Mammary epithelial cell (primary cell): ENCODE measurements at regions of chr10 and their contacts with region 1.

Region 1: GRCh38 chr10:114239117-114239993 is at the start of gene VWA2:
- DNase-seq: no peak
- H3K4me3 ChIP-seq: peak within 1 kb of the TSS; percentile 38 to 54 (median 52)
- H3K27ac ChIP-seq: no peak within 1 kb of the TSS
- H3K4me1 ChIP-seq: peaks cover 21% of the 10 kb centered on the region
- H3K27me3 ChIP-seq: peaks cover 3% of the 10 kb centered on the region
- CTCF ChIP-seq: peak in 1 of 2 donors; percentile 37
- total RNA-seq, gene VWA2: 0.14 to 2.5 TPM

Region 2: GRCh38 chr10:114188001-114188400 is 51.4 kb before region 1 on chr10:
- CTCF ChIA-PET with region 1: interaction called, 11 read pairs
- dilution Hi-C with region 1: loop called (anchors 5 kb)
- in situ Hi-C with region 1: no loop called
- intact Hi-C with region 1: no loop called
- DNase-seq: no peak
- H3K4me3 ChIP-seq: no peak overlapping the region
- H3K27ac ChIP-seq: no peak overlapping the region
- H3K4me1 ChIP-seq: no peaks in the 10 kb centered on the region
- H3K27me3 ChIP-seq: peaks cover 3% of the 10 kb centered on the region
- CTCF ChIP-seq: no peak